Activated naive CD4-positive, alpha-beta T cell treated with anti-CD3 and anti-CD28 coated beads for 36 hours (primary cell): ENCODE measurements at regions of chr16 and their contacts with region 1.

Region 1: GRCh38 chr16:15055141-15056053 is 477 bp downstream of the NTAN1 start:
- DNase-seq: peak; percentile 68
- H3K4me3 Mint-ChIP-seq: peak overlapping the region; percentile 82
- H3K27ac Mint-ChIP-seq: no peak overlapping the region
- H3K4me1 Mint-ChIP-seq: peaks cover 17% of the 10 kb centered on the region
- H3K27me3 Mint-ChIP-seq: no peaks in the 10 kb centered on the region

Region 2: GRCh38 chr16:15073101-15073500 is 17.7 kb after region 1 on chr16:
- CTCF ChIA-PET with region 1: interaction called, 12 read pairs
- intact Hi-C with region 1: no loop called
- DNase-seq: no peak
- H3K4me3 Mint-ChIP-seq: no peak overlapping the region
- H3K27ac Mint-ChIP-seq: no peak overlapping the region
- H3K4me1 Mint-ChIP-seq: peaks cover 11% of the 10 kb centered on the region
- H3K27me3 Mint-ChIP-seq: no peaks in the 10 kb centered on the region

Region 3: GRCh38 chr16:15529673-15530072 is 474.3 kb after region 1 on chr16:
- CTCF ChIA-PET with region 1: no interaction called
- intact Hi-C with region 1: no loop called
- DNase-seq: no peak
- H3K4me3 Mint-ChIP-seq: no peak overlapping the region
- H3K27ac Mint-ChIP-seq: no peak overlapping the region
- H3K4me1 Mint-ChIP-seq: no peaks in the 10 kb centered on the region
- H3K27me3 Mint-ChIP-seq: peaks cover 3% of the 10 kb centered on the region

Region 4: DNA sequence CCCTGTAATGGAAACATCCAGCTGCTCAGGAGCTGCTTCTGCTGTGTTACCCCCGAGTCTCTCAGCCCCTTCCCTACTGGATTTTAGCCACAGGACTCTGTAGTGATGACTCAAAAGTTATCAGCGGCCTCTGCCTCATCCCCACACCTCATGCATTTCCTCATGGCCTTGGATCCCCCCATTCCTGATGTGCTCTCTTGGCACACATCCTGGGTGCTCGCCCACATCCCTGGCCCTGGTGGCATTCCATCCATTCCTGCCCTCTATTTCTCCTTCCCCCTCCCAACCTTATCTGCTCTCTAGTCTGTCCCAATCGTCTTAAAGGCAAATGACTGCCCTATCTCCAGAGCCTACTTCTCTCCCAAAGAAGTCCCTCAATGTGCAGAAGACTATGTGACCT is 563.0 kb after region 1 on chr16:
- CTCF ChIA-PET with region 1: no interaction called
- intact Hi-C with region 1: no loop called
- DNase-seq: no peak
- H3K4me3 Mint-ChIP-seq: no peak overlapping the region
- H3K27ac Mint-ChIP-seq: no peak overlapping the region
- H3K4me1 Mint-ChIP-seq: no peaks in the 10 kb centered on the region
- H3K27me3 Mint-ChIP-seq: no peaks in the 10 kb centered on the region